ENCODE measurements at regions of chr12 and their contacts with region 1.

Region 1: DNA sequence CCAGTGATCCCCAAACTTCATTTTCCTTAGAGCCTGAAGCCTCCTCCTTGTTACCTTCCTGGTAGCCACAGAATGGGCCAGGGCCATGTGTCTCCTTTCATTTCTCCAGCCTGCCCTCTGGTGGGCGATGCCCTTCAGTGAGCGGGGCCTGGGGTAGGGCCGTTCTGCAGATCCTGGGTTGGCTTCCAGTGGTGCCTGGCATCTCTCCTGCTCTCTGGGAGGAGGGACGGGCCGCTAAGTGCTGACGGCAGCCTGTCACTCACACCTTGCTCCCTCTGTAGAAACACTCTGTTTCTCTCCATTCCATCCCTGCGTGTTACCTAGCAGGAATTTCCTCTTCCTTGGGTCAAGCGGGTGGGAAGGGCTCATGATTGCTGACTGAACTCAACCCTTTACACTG is 232.1 kb downstream of the CACNA1C start:
- DNase-seq: peak; percentile 31
- H3K4me3 ChIP-seq: no peak overlapping the region
- H3K27ac ChIP-seq: no peak overlapping the region
- H3K4me1 ChIP-seq: no peaks in the 10 kb centered on the region
- H3K27me3 ChIP-seq: peaks cover 2 to 5% of the 10 kb centered on the region in 2 experiments
- CTCF ChIP-seq: peak; percentile 36 to 67
- POLR2A ChIP-seq: no peak

Region 2: GRCh38 chr12:2057041-2057794 is 227.6 kb before region 1 on chr12:
- CTCF ChIA-PET with region 1: interaction called, 5 read pairs
- POLR2A ChIA-PET with region 1: no interaction called
- dilution Hi-C with region 1: no loop called
- intact Hi-C with region 1: loop called (anchors 10 kb)
- DNase-seq: peak; percentile 34
- H3K4me3 ChIP-seq: no peak overlapping the region
- H3K27ac ChIP-seq: no peak overlapping the region
- H3K4me1 ChIP-seq: peaks cover 3% of the 10 kb centered on the region
- H3K27me3 ChIP-seq: peaks cover 36 to 43% of the 10 kb centered on the region in 2 experiments
- CTCF ChIP-seq: peak; percentile 54 to 70
- POLR2A ChIP-seq: no peak

Measured in endothelial cell of umbilical vein (primary cell).